Breast epithelium (tissue), 4 donors: ENCODE measurements at regions of chr10 and their contacts with region 1.

Region 1: GRCh38 chr10:74651565-74651964 is 174.8 kb upstream of the KAT6B start:
- DNase-seq: no peak
- H3K4me3 ChIP-seq: no peak overlapping the region
- H3K27ac ChIP-seq: no peak overlapping the region
- H3K4me1 ChIP-seq: no peaks in the 10 kb centered on the region
- H3K27me3 ChIP-seq: no peaks in the 10 kb centered on the region
- CTCF ChIP-seq: no peak
- POLR2A ChIP-seq: no peak

Region 2: DNA sequence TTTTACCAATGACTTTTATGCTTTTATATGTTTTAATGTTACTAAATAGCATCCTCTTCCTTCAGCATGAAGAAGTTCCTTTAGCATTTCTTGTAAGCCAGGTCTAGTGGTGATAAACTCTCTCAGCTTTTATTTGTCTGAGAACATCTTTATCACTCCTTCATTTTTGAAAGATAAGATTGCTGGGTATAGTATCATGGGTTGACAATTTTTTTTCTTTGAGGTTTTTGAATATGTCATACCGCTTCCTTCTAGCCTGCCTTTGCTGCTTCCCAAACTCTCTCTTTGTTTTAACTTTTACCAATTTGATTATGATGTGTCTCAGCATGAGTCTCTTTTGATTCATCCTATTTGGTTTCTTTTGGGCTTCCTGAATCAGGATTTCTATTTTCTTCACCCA is 66.6 kb after region 1 on chr10:
- intact Hi-C with region 1: loop called (anchors 2 kb)
- DNase-seq: no peak
- H3K4me3 ChIP-seq: no peak overlapping the region
- H3K27ac ChIP-seq: no peak overlapping the region
- H3K4me1 ChIP-seq: no peaks in the 10 kb centered on the region
- H3K27me3 ChIP-seq: no peaks in the 10 kb centered on the region
- CTCF ChIP-seq: no peak
- POLR2A ChIP-seq: no peak